ENCODE measurements at regions of chr2 and their contacts with region 1.

Region 1: DNA sequence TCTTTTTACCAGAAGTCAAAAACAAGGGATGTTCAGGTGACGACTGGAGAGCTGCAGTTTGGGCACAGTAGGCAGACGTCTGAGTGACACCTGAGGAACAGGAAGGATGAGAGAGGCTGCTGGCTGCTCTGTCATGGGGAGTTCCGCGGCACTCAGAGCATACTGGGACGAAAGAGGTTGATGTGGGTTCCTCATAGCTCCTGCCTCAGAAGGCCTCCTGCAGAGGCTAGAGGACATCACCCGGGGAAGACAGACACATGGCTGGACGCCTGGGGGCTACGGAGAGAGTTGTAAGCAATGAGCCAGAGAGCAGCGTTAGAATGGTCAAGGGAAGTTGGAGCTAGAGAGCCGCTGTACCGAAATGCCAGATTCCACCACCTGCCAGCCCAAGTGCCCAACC is 45.1 kb upstream of the GLI2 start:
- DNase-seq: no peak
- ATAC-seq: peak in 1 of 4 experiments; percentile 13
- H3K4me3 ChIP-seq: no peak overlapping the region
- H3K4me3 Mint-ChIP-seq: no peak overlapping the region
- H3K27ac ChIP-seq: no peak overlapping the region
- H3K27ac Mint-ChIP-seq: no peak overlapping the region
- H3K4me1 ChIP-seq: peaks cover 0 to 3% of the 10 kb centered on the region in 2 experiments
- H3K4me1 Mint-ChIP-seq: peaks cover 2 to 4% (median 2%) of the 10 kb centered on the region in 3 donors
- H3K27me3 ChIP-seq: peaks cover 3 to 26% of the 10 kb centered on the region in 2 experiments
- H3K27me3 Mint-ChIP-seq: peaks cover 31 to 40% of the 10 kb centered on the region in 2 donors

Region 2: GRCh38 chr2:120499784-120500495 is 190.6 kb before region 1 on chr2:
- CTCF ChIA-PET with region 1: no interaction called
- POLR2A ChIA-PET with region 1: no interaction called
- DNase-seq: no peak
- ATAC-seq: no peak
- H3K4me3 ChIP-seq: no peak overlapping the region
- H3K4me3 Mint-ChIP-seq: no peak overlapping the region
- H3K27ac ChIP-seq: no peak overlapping the region
- H3K27ac Mint-ChIP-seq: no peak overlapping the region
- H3K4me1 ChIP-seq: no peaks in the 10 kb centered on the region
- H3K4me1 Mint-ChIP-seq: no peaks in the 10 kb centered on the region
- H3K27me3 ChIP-seq: peaks cover 0 to 22% of the 10 kb centered on the region in 2 experiments
- H3K27me3 Mint-ChIP-seq: peaks cover 4 to 10% of the 10 kb centered on the region in 2 donors

Region 3: DNA sequence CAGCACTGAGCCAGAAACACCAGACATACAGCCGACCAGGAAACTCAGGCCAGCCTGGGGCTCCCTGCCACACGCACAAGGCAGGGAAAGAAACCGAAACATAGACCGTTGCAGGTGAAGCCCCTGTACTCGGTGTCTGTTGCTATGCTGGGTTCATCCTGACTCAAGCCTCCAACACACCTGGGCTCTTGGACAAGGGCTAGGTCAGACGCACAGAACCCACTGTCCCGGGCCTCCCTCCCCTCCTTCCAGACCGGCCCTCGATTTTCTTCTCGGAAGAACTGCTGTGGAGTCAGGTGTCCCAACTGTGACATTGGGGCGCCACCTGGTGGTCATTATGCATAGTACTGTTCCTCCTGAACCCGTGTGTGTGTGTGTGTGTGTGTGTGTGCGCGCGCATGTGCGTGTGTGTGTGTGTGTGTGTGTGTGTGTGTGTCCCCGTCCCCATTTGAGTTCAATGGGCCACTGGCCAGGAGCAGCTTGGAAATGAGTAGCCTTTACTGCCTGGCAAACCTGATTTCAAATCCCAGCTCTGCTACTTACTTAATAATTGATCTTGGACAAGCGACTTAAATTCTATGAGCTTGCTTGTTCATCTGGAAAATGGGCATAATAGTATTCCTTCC is 10.3 kb before region 1 on chr2:
- CTCF ChIA-PET with region 1: interaction called, 3 to 12 read pairs
- POLR2A ChIA-PET with region 1: interaction called in 1 of 2 experiments, 4 read pairs
- DNase-seq: peak; percentile 19 to 83 (median 60)
- ATAC-seq: peak; percentile 57 to 78 (median 66)
- H3K4me3 ChIP-seq: no peak overlapping the region
- H3K4me3 Mint-ChIP-seq: peak overlapping the region in 2 of 3 donors; percentile 24 to 65
- H3K27ac ChIP-seq: no peak overlapping the region
- H3K27ac Mint-ChIP-seq: no peak overlapping the region
- H3K4me1 ChIP-seq: peaks cover 0 to 10% of the 10 kb centered on the region in 2 experiments
- H3K4me1 Mint-ChIP-seq: peaks cover 1 to 6% (median 4%) of the 10 kb centered on the region in 3 donors
- H3K27me3 ChIP-seq: peaks cover 0 to 38% of the 10 kb centered on the region in 2 experiments
- H3K27me3 Mint-ChIP-seq: peaks cover 17 to 31% of the 10 kb centered on the region in 2 donors

Measured in T-cell (primary cell).